ENCODE measurements at regions of chr15 and their contacts with region 1.

Region 1: DNA sequence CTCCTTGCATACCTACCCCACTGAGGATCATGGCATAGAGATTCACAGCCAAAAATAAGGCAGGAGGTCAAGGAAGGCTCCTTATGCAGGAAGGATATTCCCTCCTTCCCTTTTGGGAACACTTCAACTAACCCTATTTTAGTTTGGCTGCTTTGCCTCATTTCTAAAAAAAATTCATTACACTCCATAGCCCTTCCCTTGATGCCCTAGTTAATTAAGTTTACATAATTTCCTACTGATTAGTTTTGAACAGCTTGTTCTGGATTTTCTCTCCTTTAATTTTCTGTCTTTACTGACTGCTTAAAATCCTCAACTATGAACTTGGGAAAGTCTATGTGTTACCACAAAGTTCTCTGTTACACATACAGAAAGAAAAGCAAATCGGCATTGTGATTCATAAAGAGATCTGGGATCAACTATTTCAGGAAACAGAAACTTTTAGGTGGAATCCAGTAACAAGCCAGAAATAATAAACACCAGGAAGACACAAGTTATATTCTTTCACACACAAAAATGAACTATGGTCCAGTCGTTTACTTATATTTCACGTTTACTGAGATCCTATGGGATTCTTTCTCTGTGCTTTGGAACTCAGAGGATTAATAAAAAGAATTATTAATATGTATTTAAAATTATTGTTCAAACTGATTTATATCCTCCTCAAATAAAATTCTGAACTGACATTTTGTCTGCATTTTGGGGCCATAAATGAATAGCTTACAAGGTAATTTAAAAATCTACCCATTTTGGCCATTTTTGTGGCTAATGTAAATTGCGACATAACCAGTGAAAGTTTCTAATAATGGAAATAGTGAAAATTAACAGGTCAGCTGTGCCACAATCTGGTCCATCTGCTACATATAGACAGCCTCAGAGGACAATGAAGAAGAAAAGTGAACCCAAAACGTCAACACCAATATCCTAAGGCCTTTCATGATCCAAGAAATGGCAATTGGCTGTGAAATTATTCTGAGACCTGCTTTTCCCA is 113.8 kb downstream of the FRMD5 start:
- DNase-seq: peak; percentile 90
- H3K4me3 ChIP-seq: peak overlapping the region in 1 of 3 experiments; percentile 17
- H3K27ac ChIP-seq: peak overlapping the region; percentile 80
- H3K4me1 ChIP-seq: peaks cover 48% of the 10 kb centered on the region
- H3K27me3 ChIP-seq: no peaks in the 10 kb centered on the region
- CTCF ChIP-seq: no peak
- POLR2A ChIP-seq: no peak

Region 2: GRCh38 chr15:43800286-43801141 is 280.8 kb before region 1 on chr15 and contains the start of gene HYPK:
- CTCF ChIA-PET with region 1: no interaction called
- POLR2A ChIA-PET with region 1: no interaction called
- dilution Hi-C with region 1: no loop called
- intact Hi-C with region 1: no loop called
- DNase-seq: peak; percentile 92
- H3K4me3 ChIP-seq: peak within 1 kb of the TSS; percentile 78 to 94 (median 83)
- H3K27ac ChIP-seq: peak within 1 kb of the TSS; percentile 45
- H3K4me1 ChIP-seq: peaks cover 10% of the 10 kb centered on the region
- H3K27me3 ChIP-seq: no peaks in the 10 kb centered on the region
- CTCF ChIP-seq: no peak
- POLR2A ChIP-seq: peak; percentile 96
- total RNA-seq, gene HYPK: 17.8 and 19.7 TPM in 2 replicates

Region 3: DNA sequence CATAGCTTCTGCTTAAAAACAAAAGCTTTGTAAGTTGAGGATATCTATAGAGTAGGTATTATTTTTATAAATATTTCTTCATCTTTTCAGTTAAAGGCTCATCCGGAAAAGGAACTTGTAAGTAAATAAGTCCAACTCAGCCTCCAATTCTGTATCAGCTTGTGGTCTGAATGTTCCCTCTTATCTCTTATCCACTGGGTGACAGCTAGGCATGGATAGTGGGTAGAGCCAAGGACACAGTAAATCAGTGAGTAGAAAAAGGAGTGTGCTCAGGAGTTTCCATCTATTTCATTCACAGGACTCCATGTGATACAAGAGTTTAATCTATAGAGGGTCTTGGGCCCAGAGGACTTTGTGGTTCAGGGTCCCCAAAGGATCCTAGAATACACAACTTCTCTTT is 62.9 kb after region 1 on chr15:
- CTCF ChIA-PET with region 1: no interaction called
- POLR2A ChIA-PET with region 1: no interaction called
- dilution Hi-C with region 1: no loop called
- intact Hi-C with region 1: no loop called
- DNase-seq: no peak
- H3K4me3 ChIP-seq: no peak overlapping the region
- H3K27ac ChIP-seq: no peak overlapping the region
- H3K4me1 ChIP-seq: no peaks in the 10 kb centered on the region
- H3K27me3 ChIP-seq: no peaks in the 10 kb centered on the region
- CTCF ChIP-seq: no peak
- POLR2A ChIP-seq: no peak

Region 4: GRCh38 chr15:44157685-44158099 is 76.4 kb after region 1 on chr15:
- CTCF ChIA-PET with region 1: interaction called, 4 read pairs
- POLR2A ChIA-PET with region 1: no interaction called
- dilution Hi-C with region 1: no loop called
- intact Hi-C with region 1: loop called (anchors 2 kb)
- DNase-seq: peak; percentile 94
- H3K4me3 ChIP-seq: peak overlapping the region in 1 of 3 experiments; percentile 29
- H3K27ac ChIP-seq: peak overlapping the region; percentile 79
- H3K4me1 ChIP-seq: peaks cover 28% of the 10 kb centered on the region
- H3K27me3 ChIP-seq: no peaks in the 10 kb centered on the region
- CTCF ChIP-seq: no peak
- POLR2A ChIP-seq: peak; percentile 42